ENCODE measurements at regions of chr15 and their contacts with region 1.

Region 1: GRCh38 chr15:36284911-36285310 is 294.5 kb upstream of the CDIN1 start:
- DNase-seq: no peak
- ATAC-seq: no peak
- H3K4me3 ChIP-seq: no peak overlapping the region
- H3K27ac ChIP-seq: no peak overlapping the region
- H3K4me1 ChIP-seq: no peaks in the 10 kb centered on the region
- H3K27me3 ChIP-seq: no peaks in the 10 kb centered on the region
- CTCF ChIP-seq: no peak

Region 2: GRCh38 chr15:36769098-36769497 is 484.2 kb after region 1 on chr15:
- intact Hi-C with region 1: loop called in 1 of 10 experiments (anchors 5 kb)
- DNase-seq: no peak
- ATAC-seq: peak in 5 of 8 donors; percentile 14 to 66 (median 43)
- H3K4me3 ChIP-seq: no peak overlapping the region
- H3K27ac ChIP-seq: peak overlapping the region in 2 of 10 donors; percentile 6 to 11
- H3K4me1 ChIP-seq: peaks cover 0 to 36% (median 0%) of the 10 kb centered on the region in 9 donors
- H3K27me3 ChIP-seq: no peaks in the 10 kb centered on the region
- CTCF ChIP-seq: no peak

Measured in heart right ventricle (tissue), 16 donors.